ENCODE measurements at regions of chr2 and their contacts with region 1.

Region 1: GRCh38 chr2:200703127-200703925 is 108.4 kb upstream of the BZW1 start:
- DNase-seq: peak; percentile 68
- ATAC-seq: peak; percentile 65
- H3K4me3 ChIP-seq: no peak overlapping the region
- H3K27ac ChIP-seq: no peak overlapping the region
- H3K4me1 ChIP-seq: no peaks in the 10 kb centered on the region
- H3K27me3 ChIP-seq: no peaks in the 10 kb centered on the region
- CTCF ChIP-seq: peak; percentile 34 to 94 (median 63); a peak in 5 of 6 replicates
- POLR2A ChIP-seq: no peak
- RAD21 ChIP-seq: peak; percentile 95

Region 2: GRCh38 chr2:199850718-199851500 is 852.4 kb before region 1 on chr2 and contains the start of gene FTCDNL1:
- CTCF ChIA-PET with region 1: no interaction called
- POLR2A ChIA-PET with region 1: no interaction called
- RAD21 ChIA-PET with region 1: no interaction called
- intact Hi-C with region 1: loop called (anchors 5 kb)
- DNase-seq: peak; percentile 35
- ATAC-seq: peak; percentile 94
- H3K4me3 ChIP-seq: peak within 1 kb of the TSS; percentile 55 to 70
- H3K27ac ChIP-seq: peak within 1 kb of the TSS; percentile 54; the same call in 1 of the 2 replicates
- H3K4me1 ChIP-seq: peaks cover 3 to 13% of the 10 kb centered on the region in 2 experiments; a peak in 3 of 4 replicates
- H3K27me3 ChIP-seq: no peaks in the 10 kb centered on the region
- CTCF ChIP-seq: peak; percentile 33 to 79 (median 73); a peak in 5 of 6 replicates
- POLR2A ChIP-seq: peak; percentile 85
- RAD21 ChIP-seq: peak; percentile 18; the same call in 1 of the 2 replicates
- total RNA-seq, gene FTCDNL1: 2.6 TPM

Region 3: DNA sequence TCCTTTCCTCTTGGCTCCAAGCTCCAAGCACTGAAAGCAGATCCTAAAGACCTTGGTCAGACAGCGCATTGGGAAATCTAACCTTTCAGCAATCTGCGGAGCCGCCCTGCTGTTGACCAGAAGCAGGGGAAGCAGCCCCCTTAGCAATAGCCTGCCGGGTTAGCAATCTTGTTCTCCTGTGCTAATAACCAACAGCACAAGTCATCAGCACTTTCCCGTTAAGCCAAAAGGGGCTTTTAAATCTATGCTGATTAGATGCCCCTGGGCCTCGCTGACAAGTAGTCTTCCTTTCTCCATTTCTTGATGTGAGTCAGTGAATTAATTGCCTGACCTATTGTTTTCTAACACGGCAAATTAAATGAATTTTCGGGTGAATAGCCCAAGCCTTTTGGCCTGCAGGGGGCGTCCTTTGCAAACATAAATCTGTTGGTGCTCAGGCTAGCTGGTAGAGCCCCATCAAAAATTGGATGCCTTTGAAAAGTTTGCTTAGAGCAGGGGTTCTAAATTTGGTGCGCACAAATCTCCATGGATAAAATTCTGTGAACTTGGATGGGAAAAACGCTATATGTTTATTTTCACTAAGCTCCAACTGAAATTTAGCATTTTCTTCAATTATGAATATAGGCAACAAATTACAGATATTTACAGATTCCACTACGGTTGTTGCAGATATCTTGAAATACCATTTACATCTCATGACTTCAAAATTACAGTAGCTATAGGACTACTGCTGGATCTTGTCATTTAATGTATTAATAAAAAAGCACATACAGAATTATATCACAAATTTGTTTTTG is 723.3 kb before region 1 on chr2:
- CTCF ChIA-PET with region 1: interaction called, 13 read pairs
- POLR2A ChIA-PET with region 1: no interaction called
- RAD21 ChIA-PET with region 1: no interaction called
- intact Hi-C with region 1: no loop called
- DNase-seq: peak; percentile 57
- ATAC-seq: peak; percentile 79
- H3K4me3 ChIP-seq: no peak overlapping the region
- H3K27ac ChIP-seq: no peak overlapping the region
- H3K4me1 ChIP-seq: peaks cover 10 to 26% of the 10 kb centered on the region in 2 experiments
- H3K27me3 ChIP-seq: no peaks in the 10 kb centered on the region
- CTCF ChIP-seq: peak; percentile 76 to 95 (median 88)
- POLR2A ChIP-seq: no peak
- RAD21 ChIP-seq: peak; percentile 93

Region 4: DNA sequence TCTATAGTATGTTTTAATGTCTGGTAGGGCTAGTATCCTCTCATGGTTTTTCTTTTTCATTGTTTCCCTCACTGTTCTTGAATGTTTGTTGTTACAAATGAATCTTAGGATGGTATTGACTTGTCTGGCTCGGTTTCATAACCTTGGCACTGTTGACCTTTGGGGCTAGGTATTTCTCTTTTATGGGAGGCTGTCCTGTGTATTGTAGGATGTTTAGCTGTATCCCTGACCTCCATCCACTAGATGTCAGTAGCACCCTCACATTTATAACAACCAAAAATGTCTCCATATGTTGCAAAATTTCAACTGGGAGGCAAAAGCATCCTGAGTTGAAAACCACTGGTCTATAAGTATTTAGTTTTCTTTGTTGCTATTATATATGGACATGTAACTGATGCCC is 124.5 kb before region 1 on chr2:
- CTCF ChIA-PET with region 1: interaction called, 6 read pairs
- POLR2A ChIA-PET with region 1: no interaction called
- RAD21 ChIA-PET with region 1: no interaction called
- intact Hi-C with region 1: loop called (anchors 1 kb)
- DNase-seq: no peak
- ATAC-seq: peak; percentile 67
- H3K4me3 ChIP-seq: no peak overlapping the region
- H3K27ac ChIP-seq: no peak overlapping the region
- H3K4me1 ChIP-seq: no peaks in the 10 kb centered on the region
- H3K27me3 ChIP-seq: no peaks in the 10 kb centered on the region
- CTCF ChIP-seq: peak; percentile 33 to 62 (median 52); a peak in 5 of 6 replicates
- POLR2A ChIP-seq: no peak
- RAD21 ChIP-seq: peak; percentile 31

Region 5: GRCh38 chr2:200735061-200735460 is 31.7 kb after region 1 on chr2:
- CTCF ChIA-PET with region 1: interaction called, 10 read pairs
- POLR2A ChIA-PET with region 1: no interaction called
- RAD21 ChIA-PET with region 1: no interaction called
- intact Hi-C with region 1: no loop called
- DNase-seq: no peak
- ATAC-seq: no peak
- H3K4me3 ChIP-seq: no peak overlapping the region
- H3K27ac ChIP-seq: no peak overlapping the region
- H3K4me1 ChIP-seq: peaks cover 0 to 6% of the 10 kb centered on the region in 2 experiments; a peak in 1 of 4 replicates
- H3K27me3 ChIP-seq: no peaks in the 10 kb centered on the region
- CTCF ChIP-seq: no peak
- POLR2A ChIP-seq: no peak
- RAD21 ChIP-seq: no peak

Region 6: GRCh38 chr2:201242571-201243277 is 539.4 kb after region 1 on chr2:
- CTCF ChIA-PET with region 1: no interaction called
- POLR2A ChIA-PET with region 1: no interaction called
- RAD21 ChIA-PET with region 1: no interaction called
- intact Hi-C with region 1: no loop called
- DNase-seq: no peak
- ATAC-seq: no peak
- H3K4me3 ChIP-seq: no peak overlapping the region
- H3K27ac ChIP-seq: no peak overlapping the region
- H3K4me1 ChIP-seq: no peaks in the 10 kb centered on the region
- H3K27me3 ChIP-seq: no peaks in the 10 kb centered on the region
- CTCF ChIP-seq: no peak
- POLR2A ChIP-seq: no peak
- RAD21 ChIP-seq: no peak